ENCODE measurements at regions of chr7 and their contacts with region 1.

Region 1: DNA sequence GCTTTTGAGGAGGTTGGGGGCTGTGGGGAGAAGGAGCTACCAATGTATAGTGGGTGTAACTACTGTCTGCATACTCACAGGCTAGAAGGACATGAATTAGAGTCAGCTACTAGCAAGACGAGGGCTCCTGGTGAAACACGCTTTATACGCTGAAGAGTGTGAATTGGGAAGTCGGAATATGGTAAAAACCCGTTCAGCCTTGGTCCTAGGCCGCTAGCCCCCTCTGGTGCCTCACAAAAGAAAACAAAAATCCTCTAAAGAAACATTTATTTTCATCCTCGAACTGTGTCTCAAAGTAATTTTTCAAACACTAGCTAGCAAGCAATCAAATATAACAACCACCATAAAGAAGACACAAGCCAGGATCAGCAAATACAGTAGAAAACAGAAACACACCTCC is 338.1 kb upstream of the SEMA3C start:
- DNase-seq: peak; percentile 29

Region 2: GRCh38 chr7:80488406-80488805 is 768.6 kb before region 1 on chr7:
- in situ Hi-C with region 1: no loop called
- DNase-seq: no peak

Region 3: DNA sequence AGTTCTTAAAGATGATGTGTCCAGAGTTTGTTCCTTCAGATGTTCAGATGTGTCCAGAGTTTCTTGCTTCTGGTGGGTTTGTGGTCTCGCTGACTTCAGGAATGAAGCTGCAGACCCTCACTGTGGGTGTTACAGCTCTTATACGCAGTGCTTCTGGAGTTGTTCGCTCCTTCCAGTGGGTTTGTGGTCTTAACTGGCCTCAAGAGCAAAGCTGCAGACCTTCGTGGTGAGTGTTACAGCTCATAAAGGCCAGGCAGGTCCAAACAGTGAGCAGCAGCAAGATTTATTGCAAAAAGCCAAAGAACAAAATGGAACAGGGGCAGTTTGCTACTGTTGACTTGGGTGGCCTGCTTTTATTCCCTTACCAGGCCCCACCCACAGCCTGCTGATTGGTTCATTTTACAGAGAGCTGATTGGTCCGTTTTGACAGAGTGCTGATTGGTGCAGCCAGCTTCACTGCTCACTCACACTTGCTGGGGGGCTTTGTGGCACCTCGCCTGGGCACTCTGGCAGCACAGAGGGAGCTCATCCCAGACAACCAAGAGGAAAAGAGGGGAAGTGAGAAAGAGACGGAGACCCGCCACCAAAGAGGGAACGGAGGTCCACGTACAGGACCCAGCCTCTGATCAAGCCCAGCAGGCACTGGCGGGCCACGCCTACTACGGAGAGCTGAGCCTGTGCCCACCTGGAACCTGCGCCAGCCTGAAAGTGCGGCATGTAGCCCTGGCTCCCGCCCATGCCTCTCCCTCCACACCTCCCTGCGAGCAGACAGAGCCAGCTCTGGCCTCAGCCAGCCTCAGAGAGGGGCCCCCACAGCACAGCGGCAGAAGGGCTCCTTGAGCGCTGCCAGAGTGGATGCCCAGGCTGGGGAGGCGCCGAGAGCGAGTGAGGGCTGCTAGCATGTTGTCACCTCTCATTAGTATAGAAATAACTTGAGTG is 282.3 kb before region 1 on chr7:
- in situ Hi-C with region 1: loop called (anchors 10 kb)
- DNase-seq: no peak

Region 4: GRCh38 chr7:81761821-81762220 is 504.8 kb after region 1 on chr7:
- in situ Hi-C with region 1: no loop called
- DNase-seq: no peak